ENCODE measurements at regions of chr5 and their contacts with region 1.

Region 1: GRCh38 chr5:177497292-177498033 is at the start of gene PDLIM7:
- DNase-seq: peak; percentile 97 to 98 (median 97)
- H3K4me3 ChIP-seq: peak within 1 kb of the TSS; percentile 70 to 84 (median 81)
- H3K4me3 Mint-ChIP-seq: peak within 1 kb of the TSS; percentile 78 to 88
- H3K27ac ChIP-seq: peak within 1 kb of the TSS; percentile 37 to 98
- H3K27ac Mint-ChIP-seq: peak within 1 kb of the TSS; percentile 90 to 99 (median 98)
- H3K4me1 ChIP-seq: peaks cover 75 to 78% of the 10 kb centered on the region in 2 donors
- H3K4me1 Mint-ChIP-seq: peaks cover 72% of the 10 kb centered on the region
- H3K27me3 ChIP-seq: peaks cover 0 to 17% of the 10 kb centered on the region in 2 donors
- H3K27me3 Mint-ChIP-seq: peaks cover 19 to 30% (median 21%) of the 10 kb centered on the region in 3 donors
- CTCF ChIP-seq: no peak
- polyA plus RNA-seq, gene PDLIM7: 21.6 to 126 (median 27.2) TPM

Region 2: DNA sequence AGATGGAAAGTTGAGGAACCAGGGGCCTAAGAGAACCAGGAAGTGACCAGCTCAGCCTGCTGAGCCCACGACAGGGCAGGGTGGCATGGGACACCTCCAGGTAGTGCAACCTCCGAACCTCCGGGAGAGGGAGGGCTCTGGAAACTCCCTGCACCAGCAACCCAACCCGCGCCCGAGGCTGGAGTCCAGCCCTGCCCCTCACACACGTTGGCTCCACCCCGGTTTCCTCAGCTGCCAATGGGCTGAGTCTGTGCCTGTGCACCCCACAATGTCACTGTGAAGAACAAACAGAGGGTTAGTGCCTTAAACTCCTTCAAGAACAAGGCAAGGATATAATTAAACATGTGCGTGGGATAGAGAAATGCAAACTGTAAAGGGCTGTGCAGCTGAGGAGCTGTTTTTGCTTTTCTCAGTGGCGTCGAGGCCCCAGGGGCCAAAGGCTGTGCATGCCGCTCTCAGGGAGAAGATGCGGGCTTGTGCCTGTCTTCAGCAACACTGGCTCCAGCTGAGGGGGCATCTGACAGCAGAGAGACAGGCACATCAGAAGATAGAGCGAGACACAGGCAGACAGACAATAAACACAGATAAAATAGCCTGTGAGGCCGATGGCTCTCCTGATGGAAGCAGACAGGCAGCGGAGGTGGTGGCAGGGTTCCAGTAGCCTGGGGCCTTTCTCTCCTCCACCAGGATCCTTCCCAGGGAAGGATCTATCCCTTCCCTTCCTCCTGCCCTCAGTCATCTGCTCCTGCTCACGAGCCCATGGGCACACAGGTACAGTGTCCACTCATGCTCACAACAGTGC is 703.9 kb before region 1 on chr5:
- intact Hi-C with region 1: no loop called
- DNase-seq: no peak
- H3K4me3 ChIP-seq: no peak overlapping the region
- H3K4me3 Mint-ChIP-seq: no peak overlapping the region
- H3K27ac ChIP-seq: no peak overlapping the region
- H3K27ac Mint-ChIP-seq: no peak overlapping the region
- H3K4me1 ChIP-seq: no peaks in the 10 kb centered on the region
- H3K4me1 Mint-ChIP-seq: no peaks in the 10 kb centered on the region
- H3K27me3 ChIP-seq: peaks cover 0 to 23% of the 10 kb centered on the region in 2 donors
- H3K27me3 Mint-ChIP-seq: peaks cover 30 to 57% (median 32%) of the 10 kb centered on the region in 3 donors
- CTCF ChIP-seq: no peak

Region 3: GRCh38 chr5:177390363-177391300 is 106.8 kb before region 1 on chr5:
- intact Hi-C with region 1: loop called (anchors 2 to 5 kb)
- DNase-seq: peak; percentile 83 to 87 (median 83)
- H3K4me3 ChIP-seq: peak overlapping the region in 1 of 3 experiments; percentile 48
- H3K4me3 Mint-ChIP-seq: peak overlapping the region; percentile 48 to 55
- H3K27ac ChIP-seq: peak overlapping the region; percentile 55 to 85
- H3K27ac Mint-ChIP-seq: peak overlapping the region; percentile 73 to 97 (median 91)
- H3K4me1 ChIP-seq: peaks cover 44 to 48% of the 10 kb centered on the region in 2 donors
- H3K4me1 Mint-ChIP-seq: peaks cover 52% of the 10 kb centered on the region
- H3K27me3 ChIP-seq: no peaks in the 10 kb centered on the region
- H3K27me3 Mint-ChIP-seq: peaks cover 3 to 10% (median 8%) of the 10 kb centered on the region in 3 donors
- CTCF ChIP-seq: peak; percentile 99

Region 4: GRCh38 chr5:177425801-177426565 is 71.5 kb before region 1 on chr5:
- intact Hi-C with region 1: loop called in 1 of 2 experiments (anchors 2 kb)
- DNase-seq: peak; percentile 100
- H3K4me3 ChIP-seq: peak overlapping the region; percentile 32 to 74 (median 34)
- H3K4me3 Mint-ChIP-seq: peak overlapping the region; percentile 80 to 91
- H3K27ac ChIP-seq: peak overlapping the region; percentile 84 to 88
- H3K27ac Mint-ChIP-seq: peak overlapping the region; percentile 97 to 100 (median 99)
- H3K4me1 ChIP-seq: peaks cover 47 to 54% of the 10 kb centered on the region in 2 donors
- H3K4me1 Mint-ChIP-seq: peaks cover 55% of the 10 kb centered on the region
- H3K27me3 ChIP-seq: no peaks in the 10 kb centered on the region
- H3K27me3 Mint-ChIP-seq: peaks cover 0 to 1% (median 0%) of the 10 kb centered on the region in 3 donors
- CTCF ChIP-seq: no peak

Region 5: GRCh38 chr5:177446200-177447065 is 51.0 kb before region 1 on chr5 and contains the start of gene PRR7:
- intact Hi-C with region 1: no loop called
- DNase-seq: peak in 2 of 3 donors; percentile 51 to 55
- H3K4me3 ChIP-seq: peak within 1 kb of the TSS; percentile 25 to 73 (median 25)
- H3K4me3 Mint-ChIP-seq: peak within 1 kb of the TSS; percentile 66 to 73
- H3K27ac ChIP-seq: peak within 1 kb of the TSS in 1 of 2 donors; percentile 45
- H3K27ac Mint-ChIP-seq: peak within 1 kb of the TSS; percentile 42 to 84 (median 61)
- H3K4me1 ChIP-seq: peaks cover 38 to 57% of the 10 kb centered on the region in 2 donors
- H3K4me1 Mint-ChIP-seq: peaks cover 41% of the 10 kb centered on the region
- H3K27me3 ChIP-seq: peaks cover 0 to 32% of the 10 kb centered on the region in 2 donors
- H3K27me3 Mint-ChIP-seq: peaks cover 32 to 48% (median 36%) of the 10 kb centered on the region in 3 donors
- CTCF ChIP-seq: no peak
- polyA plus RNA-seq, gene PRR7: 1.8 to 17.4 (median 2.1) TPM

Region 6: GRCh38 chr5:177509381-177509951 is 12.0 kb after region 1 on chr5 and contains the start of gene DOK3:
- intact Hi-C with region 1: loop called in 1 of 2 experiments (anchors 2 kb)
- DNase-seq: peak; percentile 81 to 86 (median 86)
- H3K4me3 ChIP-seq: peak within 1 kb of the TSS; percentile 82 to 100 (median 96)
- H3K4me3 Mint-ChIP-seq: peak within 1 kb of the TSS; percentile 98 to 99
- H3K27ac ChIP-seq: peak within 1 kb of the TSS; percentile 98 to 100
- H3K27ac Mint-ChIP-seq: peak within 1 kb of the TSS; percentile 99 to 100 (median 99)
- H3K4me1 ChIP-seq: peaks cover 49 to 70% of the 10 kb centered on the region in 2 donors
- H3K4me1 Mint-ChIP-seq: peaks cover 49% of the 10 kb centered on the region
- H3K27me3 ChIP-seq: no peaks in the 10 kb centered on the region
- H3K27me3 Mint-ChIP-seq: peaks cover 0 to 9% (median 3%) of the 10 kb centered on the region in 3 donors
- CTCF ChIP-seq: no peak
- polyA plus RNA-seq, gene DOK3: 62.8 to 196 (median 98.3) TPM

Measured in CD14-positive monocyte (primary cell).